Activated B cell treated with CpG ODN at 0.5 μM for 24 hours (primary cell): ENCODE measurements at regions of chr11 and their contacts with region 1.

Region 1: DNA sequence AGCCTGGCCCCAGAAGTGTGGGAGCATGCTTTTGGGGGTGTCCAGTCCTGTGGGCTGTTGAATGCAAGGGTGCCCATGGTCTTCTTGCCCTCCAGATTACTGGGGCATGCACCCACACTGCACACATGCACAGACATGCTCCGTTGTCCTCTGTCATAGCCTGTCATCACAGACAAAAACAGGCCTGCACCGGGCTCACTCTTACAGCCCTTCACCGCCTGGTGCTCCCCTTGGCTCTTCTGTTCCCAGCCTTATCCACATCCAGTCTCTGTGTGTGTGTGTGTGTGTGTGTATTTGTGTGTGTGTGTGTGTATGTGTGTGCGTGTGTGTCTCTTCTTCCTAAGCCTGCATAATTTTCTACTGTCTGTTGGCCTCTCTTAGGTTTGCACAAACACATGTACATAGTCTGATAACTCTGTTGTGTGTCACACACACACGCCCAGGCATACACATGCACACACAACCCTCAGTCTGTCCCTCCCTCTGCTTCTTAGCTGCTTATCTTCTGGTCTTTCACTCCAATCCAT is 23.4 kb upstream of the NECTIN1 start:
- DNase-seq: no peak
- ATAC-seq: peak; percentile 73
- H3K4me3 Mint-ChIP-seq: peak overlapping the region; percentile 84
- H3K27ac Mint-ChIP-seq: peak overlapping the region; percentile 94
- H3K4me1 Mint-ChIP-seq: peaks cover 35% of the 10 kb centered on the region
- H3K27me3 Mint-ChIP-seq: peaks cover 4% of the 10 kb centered on the region
- CTCF ChIP-seq: no peak

Region 2: GRCh38 chr11:119699227-119699626 is 53.2 kb before region 1 on chr11:
- CTCF ChIA-PET with region 1: no interaction called
- POLR2A ChIA-PET with region 1: no interaction called
- intact Hi-C with region 1: no loop called
- DNase-seq: no peak
- ATAC-seq: no peak
- H3K4me3 Mint-ChIP-seq: no peak overlapping the region
- H3K27ac Mint-ChIP-seq: no peak overlapping the region
- H3K4me1 Mint-ChIP-seq: peaks cover 6% of the 10 kb centered on the region
- H3K27me3 Mint-ChIP-seq: no peaks in the 10 kb centered on the region
- CTCF ChIP-seq: no peak

Region 3: GRCh38 chr11:119741369-119742262 is 10.8 kb before region 1 on chr11:
- CTCF ChIA-PET with region 1: interaction called, 4 read pairs
- POLR2A ChIA-PET with region 1: interaction called, 7 read pairs
- intact Hi-C with region 1: loop called (anchors 1 kb)
- DNase-seq: peak; percentile 67
- ATAC-seq: peak; percentile 88
- H3K4me3 Mint-ChIP-seq: peak overlapping the region; percentile 25
- H3K27ac Mint-ChIP-seq: no peak overlapping the region
- H3K4me1 Mint-ChIP-seq: peaks cover 10% of the 10 kb centered on the region
- H3K27me3 Mint-ChIP-seq: peaks cover 51% of the 10 kb centered on the region
- CTCF ChIP-seq: no peak

Region 4: DNA sequence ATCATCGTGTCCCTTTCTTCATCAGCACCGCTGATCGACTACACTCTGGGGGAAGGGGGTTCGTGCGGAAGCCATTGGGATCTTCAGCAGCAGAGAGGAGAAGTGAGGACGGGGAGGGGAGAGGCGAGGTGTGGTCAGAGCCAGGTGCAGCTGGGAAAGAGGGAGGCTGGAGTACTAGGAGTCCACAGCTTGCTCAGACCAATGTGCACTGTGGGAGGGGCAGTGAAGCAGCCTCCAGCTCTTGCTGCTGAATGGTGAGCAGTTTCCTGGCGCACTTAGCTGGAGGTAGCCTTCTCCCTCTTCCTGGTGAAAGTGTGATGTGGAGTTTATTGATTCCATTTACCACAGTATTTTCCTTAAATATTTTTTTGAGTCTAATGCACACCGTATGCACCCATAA is 75.6 kb after region 1 on chr11:
- CTCF ChIA-PET with region 1: no interaction called
- POLR2A ChIA-PET with region 1: no interaction called
- intact Hi-C with region 1: no loop called
- DNase-seq: no peak
- ATAC-seq: no peak
- H3K4me3 Mint-ChIP-seq: no peak overlapping the region
- H3K27ac Mint-ChIP-seq: no peak overlapping the region
- H3K4me1 Mint-ChIP-seq: no peaks in the 10 kb centered on the region
- H3K27me3 Mint-ChIP-seq: peaks cover 26% of the 10 kb centered on the region
- CTCF ChIP-seq: no peak

Region 5: GRCh38 chr11:120147092-120147949 is 394.9 kb after region 1 on chr11:
- CTCF ChIA-PET with region 1: no interaction called
- POLR2A ChIA-PET with region 1: no interaction called
- intact Hi-C with region 1: no loop called
- DNase-seq: no peak
- ATAC-seq: no peak
- H3K4me3 Mint-ChIP-seq: no peak overlapping the region
- H3K27ac Mint-ChIP-seq: no peak overlapping the region
- H3K4me1 Mint-ChIP-seq: no peaks in the 10 kb centered on the region
- H3K27me3 Mint-ChIP-seq: peaks cover 28% of the 10 kb centered on the region
- CTCF ChIP-seq: no peak